GM12878 (cell line): ENCODE measurements at regions of chrX and their contacts with region 1.

Region 1: GRCh38 chrX:108224727-108225621 is 133.4 kb downstream of the ATG4A start:
- DNase-seq: peak; percentile 16
- ATAC-seq: peak; percentile 87
- H3K4me3 ChIP-seq: no peak overlapping the region
- H3K27ac ChIP-seq: no peak overlapping the region
- H3K4me1 ChIP-seq: no peaks in the 10 kb centered on the region
- H3K27me3 ChIP-seq: no peaks in the 10 kb centered on the region
- CTCF ChIP-seq: peak; percentile 59 to 67 (median 64)
- EP300 ChIP-seq: no peak
- POLR2A ChIP-seq: no peak
- RAD21 ChIP-seq: peak; percentile 76

Region 2: DNA sequence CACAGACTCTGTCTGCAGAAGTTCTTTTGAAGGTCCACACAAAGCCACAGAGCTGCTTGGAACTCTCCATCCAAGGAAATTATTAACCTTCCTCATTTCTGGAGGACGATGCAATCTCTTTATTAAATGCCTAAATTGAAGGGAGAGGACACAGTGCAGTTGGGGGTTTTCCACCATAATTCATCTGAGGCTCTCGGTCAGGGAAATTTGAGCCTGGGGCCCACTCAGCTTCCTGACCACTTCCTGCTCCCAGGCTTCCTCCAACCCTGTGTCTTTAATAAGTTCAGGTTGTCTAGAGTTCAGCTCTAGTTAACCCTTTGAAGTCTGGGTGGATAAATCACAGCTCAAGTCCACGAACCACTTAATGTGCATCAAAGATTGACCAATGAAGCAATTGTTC is 538.2 kb before region 1 on chrX:
- CTCF ChIA-PET with region 1: no interaction called
- POLR2A ChIA-PET with region 1: no interaction called
- RAD21 ChIA-PET with region 1: no interaction called
- SMC1A ChIA-PET with region 1: no interaction called
- in situ Hi-C with region 1: no loop called
- intact Hi-C with region 1: no loop called
- DNase-seq: no peak
- ATAC-seq: peak; percentile 50
- H3K4me3 ChIP-seq: no peak overlapping the region
- H3K27ac ChIP-seq: no peak overlapping the region
- H3K4me1 ChIP-seq: peaks cover 18% of the 10 kb centered on the region
- H3K27me3 ChIP-seq: no peaks in the 10 kb centered on the region
- CTCF ChIP-seq: no peak
- EP300 ChIP-seq: no peak
- POLR2A ChIP-seq: no peak
- RAD21 ChIP-seq: no peak

Region 3: GRCh38 chrX:108029928-108030711 is 194.9 kb before region 1 on chrX:
- CTCF ChIA-PET with region 1: no interaction called
- POLR2A ChIA-PET with region 1: no interaction called
- RAD21 ChIA-PET with region 1: no interaction called
- SMC1A ChIA-PET with region 1: no interaction called
- in situ Hi-C with region 1: no loop called
- intact Hi-C with region 1: no loop called
- DNase-seq: no peak
- ATAC-seq: 0 out of 3 replicates have a peak, but pooled peaks have one; percentile 19
- H3K4me3 ChIP-seq: no peak overlapping the region
- H3K27ac ChIP-seq: no peak overlapping the region
- H3K4me1 ChIP-seq: no peaks in the 10 kb centered on the region
- H3K27me3 ChIP-seq: no peaks in the 10 kb centered on the region
- CTCF ChIP-seq: no peak
- EP300 ChIP-seq: no peak
- POLR2A ChIP-seq: no peak
- RAD21 ChIP-seq: no peak

Region 4: DNA sequence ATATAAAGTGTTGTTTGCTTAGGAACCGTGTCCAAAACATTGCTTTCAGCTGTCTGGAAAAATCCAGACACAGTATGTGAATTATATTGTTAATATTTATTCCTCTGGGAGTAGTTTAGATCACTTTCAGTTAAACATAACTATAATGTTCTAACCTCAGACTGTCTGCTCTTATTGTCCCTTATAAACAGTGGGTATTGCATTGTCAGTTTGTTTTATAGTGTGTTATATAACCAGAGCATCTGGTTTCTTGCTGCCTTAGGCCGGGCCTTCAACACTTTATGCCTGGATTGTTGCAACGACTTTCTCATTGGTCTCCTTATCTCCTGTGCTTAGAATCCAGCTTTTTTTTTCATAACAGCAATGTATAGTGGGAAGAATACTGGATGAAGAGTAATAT is 107.0 kb before region 1 on chrX:
- CTCF ChIA-PET with region 1: no interaction called
- POLR2A ChIA-PET with region 1: no interaction called
- RAD21 ChIA-PET with region 1: no interaction called
- SMC1A ChIA-PET with region 1: no interaction called
- in situ Hi-C with region 1: no loop called
- intact Hi-C with region 1: no loop called
- DNase-seq: no peak
- ATAC-seq: no peak
- H3K4me3 ChIP-seq: no peak overlapping the region
- H3K27ac ChIP-seq: no peak overlapping the region
- H3K4me1 ChIP-seq: no peaks in the 10 kb centered on the region
- H3K27me3 ChIP-seq: no peaks in the 10 kb centered on the region; a peak in 1 of 4 replicates
- CTCF ChIP-seq: no peak
- EP300 ChIP-seq: no peak
- POLR2A ChIP-seq: no peak
- RAD21 ChIP-seq: no peak

Region 5: DNA sequence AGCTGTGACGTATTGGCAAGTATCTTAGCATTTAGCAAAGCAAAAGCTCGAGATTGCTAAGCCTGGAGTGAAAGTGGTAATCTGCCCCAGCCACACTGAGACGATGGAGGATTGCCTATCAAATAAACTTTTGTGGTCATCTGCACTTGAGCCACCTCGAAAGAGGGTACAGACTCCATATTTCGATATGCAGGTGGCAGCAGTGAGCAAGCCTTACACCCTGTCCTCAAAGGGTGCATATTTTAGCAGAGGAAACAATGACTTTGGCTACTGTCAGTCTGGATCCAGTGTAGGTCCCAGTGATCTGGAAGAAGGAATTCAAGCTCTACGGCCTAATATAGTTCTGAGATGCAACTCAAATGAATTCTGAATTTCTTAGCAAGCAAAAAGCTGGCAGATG is 20.5 kb after region 1 on chrX:
- CTCF ChIA-PET with region 1: interaction called, 13 read pairs
- POLR2A ChIA-PET with region 1: no interaction called
- RAD21 ChIA-PET with region 1: no interaction called
- SMC1A ChIA-PET with region 1: no interaction called
- in situ Hi-C with region 1: no loop called
- intact Hi-C with region 1: no loop called
- DNase-seq: no peak
- ATAC-seq: peak; percentile 64
- H3K4me3 ChIP-seq: no peak overlapping the region
- H3K27ac ChIP-seq: no peak overlapping the region
- H3K4me1 ChIP-seq: no peaks in the 10 kb centered on the region
- H3K27me3 ChIP-seq: no peaks in the 10 kb centered on the region
- CTCF ChIP-seq: peak in 1 of 3 experiments; percentile 15; a peak in 1 of 6 replicates
- EP300 ChIP-seq: no peak
- POLR2A ChIP-seq: no peak
- RAD21 ChIP-seq: peak; percentile 17; the same call in 1 of the 2 replicates

Region 6: GRCh38 chrX:108299101-108299591 is 74.2 kb after region 1 on chrX:
- CTCF ChIA-PET with region 1: interaction called, 27 read pairs
- POLR2A ChIA-PET with region 1: no interaction called
- RAD21 ChIA-PET with region 1: interaction called, 19 read pairs
- SMC1A ChIA-PET with region 1: interaction called, 17 read pairs
- in situ Hi-C with region 1: no loop called
- intact Hi-C with region 1: loop called (anchors 2 kb)
- DNase-seq: peak; percentile 17
- ATAC-seq: peak; percentile 73
- H3K4me3 ChIP-seq: no peak overlapping the region
- H3K27ac ChIP-seq: no peak overlapping the region
- H3K4me1 ChIP-seq: no peaks in the 10 kb centered on the region
- H3K27me3 ChIP-seq: no peaks in the 10 kb centered on the region; a peak in 1 of 4 replicates
- CTCF ChIP-seq: no peak
- EP300 ChIP-seq: no peak
- POLR2A ChIP-seq: no peak
- RAD21 ChIP-seq: no peak

Region 7: GRCh38 chrX:108304210-108304609 is 79.2 kb after region 1 on chrX:
- CTCF ChIA-PET with region 1: interaction called, 27 read pairs
- POLR2A ChIA-PET with region 1: no interaction called
- RAD21 ChIA-PET with region 1: interaction called, 19 read pairs
- SMC1A ChIA-PET with region 1: interaction called, 17 read pairs
- in situ Hi-C with region 1: no loop called
- intact Hi-C with region 1: loop called (anchors 2 kb)
- DNase-seq: no peak
- ATAC-seq: peak; percentile 56; the same call in 2 of the 3 replicates
- H3K4me3 ChIP-seq: no peak overlapping the region
- H3K27ac ChIP-seq: no peak overlapping the region
- H3K4me1 ChIP-seq: no peaks in the 10 kb centered on the region
- H3K27me3 ChIP-seq: no peaks in the 10 kb centered on the region; a peak in 2 of 4 replicates
- CTCF ChIP-seq: peak; percentile 9 to 42 (median 16); a peak in 4 of 6 replicates
- EP300 ChIP-seq: no peak
- POLR2A ChIP-seq: no peak
- RAD21 ChIP-seq: peak; percentile 64

Region 8: GRCh38 chrX:108312938-108313337 is 88.0 kb after region 1 on chrX:
- CTCF ChIA-PET with region 1: interaction called, 13 read pairs
- POLR2A ChIA-PET with region 1: no interaction called
- RAD21 ChIA-PET with region 1: no interaction called
- SMC1A ChIA-PET with region 1: no interaction called
- in situ Hi-C with region 1: no loop called
- intact Hi-C with region 1: no loop called
- DNase-seq: no peak
- ATAC-seq: no peak
- H3K4me3 ChIP-seq: no peak overlapping the region
- H3K27ac ChIP-seq: no peak overlapping the region
- H3K4me1 ChIP-seq: no peaks in the 10 kb centered on the region
- H3K27me3 ChIP-seq: no peaks in the 10 kb centered on the region
- CTCF ChIP-seq: no peak
- EP300 ChIP-seq: no peak
- POLR2A ChIP-seq: no peak
- RAD21 ChIP-seq: no peak

Region 9: DNA sequence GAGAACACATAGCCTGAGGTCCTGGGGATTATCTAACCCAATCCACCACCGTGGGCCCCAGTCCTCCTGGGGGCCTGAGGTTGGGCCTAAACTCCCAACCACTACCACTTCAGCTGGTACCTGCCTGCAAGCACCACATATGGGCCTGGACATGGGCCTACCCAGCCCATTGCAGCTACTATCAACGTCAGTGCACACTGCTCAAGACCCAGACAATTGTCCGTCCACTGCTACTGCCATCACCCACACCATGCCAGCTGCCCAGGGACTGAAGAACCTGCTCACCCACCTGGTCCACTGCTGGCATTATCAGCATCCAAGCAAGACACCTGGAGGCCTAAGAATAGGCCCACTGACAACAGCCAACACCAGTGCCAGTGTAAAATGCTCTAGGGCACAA is 302.8 kb after region 1 on chrX:
- CTCF ChIA-PET with region 1: no interaction called
- POLR2A ChIA-PET with region 1: no interaction called
- RAD21 ChIA-PET with region 1: no interaction called
- SMC1A ChIA-PET with region 1: interaction called, 3 read pairs
- in situ Hi-C with region 1: loop called (anchors 10 kb)
- intact Hi-C with region 1: no loop called
- DNase-seq: no peak
- ATAC-seq: no peak
- H3K4me3 ChIP-seq: no peak overlapping the region
- H3K27ac ChIP-seq: no peak overlapping the region
- H3K4me1 ChIP-seq: no peaks in the 10 kb centered on the region
- H3K27me3 ChIP-seq: no peaks in the 10 kb centered on the region
- CTCF ChIP-seq: no peak
- EP300 ChIP-seq: no peak
- POLR2A ChIP-seq: no peak
- RAD21 ChIP-seq: no peak

Region 10: GRCh38 chrX:108537005-108537404 is 312.0 kb after region 1 on chrX:
- CTCF ChIA-PET with region 1: interaction called, 43 read pairs
- POLR2A ChIA-PET with region 1: no interaction called
- RAD21 ChIA-PET with region 1: interaction called, 5 read pairs
- SMC1A ChIA-PET with region 1: interaction called, 7 read pairs
- in situ Hi-C with region 1: no loop called
- intact Hi-C with region 1: loop called (anchors 2 kb)
- DNase-seq: no peak
- ATAC-seq: peak; percentile 90
- H3K4me3 ChIP-seq: no peak overlapping the region
- H3K27ac ChIP-seq: no peak overlapping the region
- H3K4me1 ChIP-seq: no peaks in the 10 kb centered on the region
- H3K27me3 ChIP-seq: no peaks in the 10 kb centered on the region; a peak in 1 of 4 replicates
- CTCF ChIP-seq: peak; percentile 56 to 75 (median 67)
- EP300 ChIP-seq: no peak
- POLR2A ChIP-seq: no peak
- RAD21 ChIP-seq: peak; percentile 69